ENCODE measurements at regions of chr3 and their contacts with region 1.

Region 1: DNA sequence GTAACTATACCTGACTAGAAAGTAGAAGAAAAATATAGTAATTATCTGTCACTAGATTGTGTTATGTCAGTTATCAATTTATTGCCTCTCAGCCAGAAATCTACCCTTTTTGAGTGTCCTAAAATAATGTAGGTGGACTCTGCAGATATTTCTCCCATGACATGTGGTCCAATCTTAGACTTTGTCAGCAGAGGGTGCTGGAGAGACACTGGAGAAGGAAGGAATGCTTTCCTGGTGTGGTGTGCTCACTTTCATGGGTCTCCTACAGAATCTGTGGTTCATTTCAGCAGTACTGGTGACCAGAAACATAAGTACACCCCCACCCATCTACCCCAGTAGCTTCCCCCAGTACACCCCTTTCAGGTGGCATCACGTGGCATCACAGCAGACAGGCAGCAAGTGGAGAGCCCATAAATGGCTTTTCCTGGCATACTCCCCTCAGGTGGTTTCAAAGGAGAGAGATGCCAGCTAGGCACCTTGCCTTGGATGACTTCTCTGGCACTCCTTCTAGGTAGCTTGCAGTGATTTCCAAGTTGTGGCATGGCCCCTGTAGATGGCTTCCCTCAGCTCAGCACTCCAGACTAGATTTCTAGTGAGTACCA is 114.7 kb downstream of the GADL1 start:
- DNase-seq: no peak
- H3K4me3 ChIP-seq: no peak overlapping the region
- H3K27ac ChIP-seq: no peak overlapping the region
- H3K4me1 ChIP-seq: no peaks in the 10 kb centered on the region
- H3K27me3 ChIP-seq: no peaks in the 10 kb centered on the region
- CTCF ChIP-seq: no peak
- POLR2A ChIP-seq: no peak

Region 2: GRCh38 chr3:30795176-30795575 is 15.4 kb after region 1 on chr3:
- intact Hi-C with region 1: no loop called
- DNase-seq: no peak
- H3K4me3 ChIP-seq: no peak overlapping the region
- H3K27ac ChIP-seq: no peak overlapping the region
- H3K4me1 ChIP-seq: no peaks in the 10 kb centered on the region
- H3K27me3 ChIP-seq: no peaks in the 10 kb centered on the region
- CTCF ChIP-seq: no peak
- POLR2A ChIP-seq: no peak

Region 3: GRCh38 chr3:31129241-31129640 is 349.5 kb after region 1 on chr3:
- intact Hi-C with region 1: loop called (anchors 10 kb)
- DNase-seq: no peak
- H3K4me3 ChIP-seq: no peak overlapping the region
- H3K27ac ChIP-seq: no peak overlapping the region
- H3K4me1 ChIP-seq: no peaks in the 10 kb centered on the region
- H3K27me3 ChIP-seq: no peaks in the 10 kb centered on the region
- CTCF ChIP-seq: no peak
- POLR2A ChIP-seq: no peak